Heart left ventricle (tissue), 16 donors: ENCODE measurements at regions of chr2 and their contacts with region 1.

Region 1: GRCh38 chr2:215269397-215270119 is 42.3 kb upstream of the ATIC start:
- DNase-seq: peak in 4 of 5 donors; percentile 34 to 67 (median 46)
- ATAC-seq: peak in 1 of 4 donors; percentile 60
- H3K4me3 ChIP-seq: peak overlapping the region in 3 of 12 donors; percentile 3 to 26 (median 24)
- H3K27ac ChIP-seq: no peak overlapping the region
- H3K4me1 ChIP-seq: peaks cover 0 to 6% (median 0%) of the 10 kb centered on the region in 12 donors
- H3K27me3 ChIP-seq: no peaks in the 10 kb centered on the region
- CTCF ChIP-seq: peak; percentile 62 to 91 (median 78)
- POLR2A ChIP-seq: no peak

Region 2: GRCh38 chr2:213806125-213806726 is 1463.3 kb before region 1 on chr2:
- intact Hi-C with region 1: loop called in 2 of 10 experiments (anchors 5 to 10 kb)
- DNase-seq: no peak
- ATAC-seq: no peak
- H3K4me3 ChIP-seq: no peak overlapping the region
- H3K27ac ChIP-seq: no peak overlapping the region
- H3K4me1 ChIP-seq: no peaks in the 10 kb centered on the region
- H3K27me3 ChIP-seq: no peaks in the 10 kb centered on the region
- CTCF ChIP-seq: peak in 10 of 12 donors; percentile 12 to 54 (median 28)
- POLR2A ChIP-seq: no peak

Region 3: DNA sequence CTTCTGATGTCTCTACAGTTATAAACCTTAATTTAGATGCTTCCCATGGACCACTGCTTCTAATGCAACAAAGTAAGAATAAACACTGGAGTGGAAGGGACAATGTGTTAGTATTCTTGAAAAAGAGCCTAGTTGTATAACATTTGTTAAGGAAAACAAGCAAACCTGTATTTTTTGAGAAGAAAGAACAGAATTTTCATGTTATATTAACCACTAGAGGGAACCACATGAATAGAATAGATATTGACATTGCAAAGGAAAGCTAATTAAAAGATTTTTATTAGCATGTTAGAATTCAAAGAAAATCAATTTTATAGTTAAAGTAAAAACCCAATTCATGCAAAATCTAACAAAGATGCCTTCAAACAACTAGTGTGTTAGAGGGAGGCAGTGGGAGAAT is 308.9 kb before region 1 on chr2:
- intact Hi-C with region 1: loop called in 3 of 10 experiments (anchors 5 to 10 kb)
- DNase-seq: no peak
- ATAC-seq: no peak
- H3K4me3 ChIP-seq: no peak overlapping the region
- H3K27ac ChIP-seq: no peak overlapping the region
- H3K4me1 ChIP-seq: no peaks in the 10 kb centered on the region
- H3K27me3 ChIP-seq: no peaks in the 10 kb centered on the region
- CTCF ChIP-seq: peak in 5 of 12 donors; percentile 4 to 37 (median 27)
- POLR2A ChIP-seq: no peak

Region 4: DNA sequence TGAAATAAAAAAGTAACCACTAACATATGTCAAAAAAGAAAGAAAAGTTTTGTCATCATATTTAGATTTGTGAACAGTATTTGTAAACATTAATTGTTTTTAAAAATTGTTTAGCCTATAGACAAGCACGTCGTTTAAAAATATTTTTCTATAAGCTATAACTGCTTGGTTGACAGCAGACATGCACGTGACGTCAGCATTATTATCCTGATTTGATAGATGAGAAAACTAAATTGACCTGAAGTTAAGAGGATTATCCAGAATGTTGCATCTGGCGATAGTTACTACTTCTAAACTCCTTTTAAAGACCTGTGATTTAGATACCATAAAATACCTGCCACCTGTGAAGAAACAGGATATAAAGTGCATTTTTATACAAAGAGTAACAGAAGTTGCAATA is 303.1 kb before region 1 on chr2:
- intact Hi-C with region 1: loop called in 1 of 10 experiments (anchors 5 kb)
- DNase-seq: no peak
- ATAC-seq: no peak
- H3K4me3 ChIP-seq: no peak overlapping the region
- H3K27ac ChIP-seq: no peak overlapping the region
- H3K4me1 ChIP-seq: no peaks in the 10 kb centered on the region
- H3K27me3 ChIP-seq: no peaks in the 10 kb centered on the region
- CTCF ChIP-seq: no peak
- POLR2A ChIP-seq: no peak

Region 5: GRCh38 chr2:215238492-215239119 is 31.0 kb before region 1 on chr2:
- intact Hi-C with region 1: no loop called
- DNase-seq: no peak
- ATAC-seq: no peak
- H3K4me3 ChIP-seq: no peak overlapping the region
- H3K27ac ChIP-seq: no peak overlapping the region
- H3K4me1 ChIP-seq: no peaks in the 10 kb centered on the region
- H3K27me3 ChIP-seq: peaks cover 0 to 3% (median 0%) of the 10 kb centered on the region in 9 donors
- CTCF ChIP-seq: no peak
- POLR2A ChIP-seq: no peak

Region 6: GRCh38 chr2:215314898-215315297 is 45.3 kb after region 1 on chr2:
- intact Hi-C with region 1: no loop called
- DNase-seq: no peak
- ATAC-seq: no peak
- H3K4me3 ChIP-seq: no peak overlapping the region
- H3K27ac ChIP-seq: no peak overlapping the region
- H3K4me1 ChIP-seq: peaks cover 0 to 21% (median 6%) of the 10 kb centered on the region in 12 donors
- H3K27me3 ChIP-seq: no peaks in the 10 kb centered on the region
- CTCF ChIP-seq: no peak
- POLR2A ChIP-seq: no peak

Region 7: GRCh38 chr2:215556979-215557378 is 287.4 kb after region 1 on chr2:
- intact Hi-C with region 1: no loop called
- DNase-seq: no peak
- ATAC-seq: no peak
- H3K4me3 ChIP-seq: no peak overlapping the region
- H3K27ac ChIP-seq: no peak overlapping the region
- H3K4me1 ChIP-seq: no peaks in the 10 kb centered on the region
- H3K27me3 ChIP-seq: no peaks in the 10 kb centered on the region
- CTCF ChIP-seq: no peak
- POLR2A ChIP-seq: no peak